CD4-positive, alpha-beta T cell (primary cell): ENCODE measurements at regions of chr4 and their contacts with region 1.

Region 1: DNA sequence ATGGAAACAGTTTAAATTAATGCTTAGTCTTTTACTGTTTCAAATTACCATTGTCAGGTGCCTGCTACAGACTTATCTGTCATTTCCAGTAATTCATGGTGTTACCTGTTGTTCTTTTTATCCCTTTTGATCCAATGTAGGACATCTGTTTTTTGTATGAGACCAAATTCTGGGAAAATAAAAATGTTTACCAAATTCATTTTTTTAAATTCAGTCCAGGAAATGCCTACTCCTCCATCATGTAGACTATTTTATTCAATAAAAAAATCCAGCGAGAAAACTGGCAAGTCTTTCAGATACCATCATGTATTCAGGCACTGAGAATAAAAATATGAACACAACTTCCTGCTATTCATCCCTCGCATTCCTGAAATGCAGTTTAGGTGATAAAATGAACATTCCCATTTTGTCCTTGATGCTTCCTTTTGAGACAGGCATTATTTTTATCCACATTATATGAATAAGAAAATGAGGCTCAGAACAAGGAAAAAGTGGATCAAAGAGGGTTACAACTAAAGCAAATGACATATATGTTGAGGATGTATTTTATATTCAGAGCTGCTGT is 584.2 kb downstream of the SPRY1 start:
- DNase-seq: no peak
- ATAC-seq: no peak
- H3K4me3 ChIP-seq: no peak overlapping the region
- H3K4me3 Mint-ChIP-seq: no peak overlapping the region
- H3K27ac ChIP-seq: no peak overlapping the region
- H3K27ac Mint-ChIP-seq: no peak overlapping the region
- H3K4me1 ChIP-seq: no peaks in the 10 kb centered on the region
- H3K4me1 Mint-ChIP-seq: no peaks in the 10 kb centered on the region
- H3K27me3 ChIP-seq: no peaks in the 10 kb centered on the region
- H3K27me3 Mint-ChIP-seq: no peaks in the 10 kb centered on the region
- CTCF ChIP-seq: no peak

Region 2: GRCh38 chr4:123929565-123929964 is 51.3 kb before region 1 on chr4:
- CTCF ChIA-PET with region 1: no interaction called
- POLR2A ChIA-PET with region 1: no interaction called
- intact Hi-C with region 1: loop called in 1 of 2 experiments (anchors 2 kb)
- DNase-seq: no peak
- ATAC-seq: no peak
- H3K4me3 ChIP-seq: no peak overlapping the region
- H3K4me3 Mint-ChIP-seq: no peak overlapping the region
- H3K27ac ChIP-seq: no peak overlapping the region
- H3K27ac Mint-ChIP-seq: no peak overlapping the region
- H3K4me1 ChIP-seq: no peaks in the 10 kb centered on the region
- H3K4me1 Mint-ChIP-seq: no peaks in the 10 kb centered on the region
- H3K27me3 ChIP-seq: no peaks in the 10 kb centered on the region
- H3K27me3 Mint-ChIP-seq: no peaks in the 10 kb centered on the region
- CTCF ChIP-seq: no peak

Region 3: GRCh38 chr4:125131893-125132680 is 1151.3 kb after region 1 on chr4:
- CTCF ChIA-PET with region 1: no interaction called
- POLR2A ChIA-PET with region 1: no interaction called
- intact Hi-C with region 1: no loop called
- DNase-seq: no peak
- ATAC-seq: no peak
- H3K4me3 ChIP-seq: no peak overlapping the region
- H3K4me3 Mint-ChIP-seq: no peak overlapping the region
- H3K27ac ChIP-seq: no peak overlapping the region
- H3K27ac Mint-ChIP-seq: no peak overlapping the region
- H3K4me1 ChIP-seq: no peaks in the 10 kb centered on the region
- H3K4me1 Mint-ChIP-seq: no peaks in the 10 kb centered on the region
- H3K27me3 ChIP-seq: no peaks in the 10 kb centered on the region
- H3K27me3 Mint-ChIP-seq: no peaks in the 10 kb centered on the region
- CTCF ChIP-seq: no peak